H1 (cell line): ENCODE measurements at regions of chr1 and their contacts with region 1.

Region 1: GRCh38 chr1:201481761-201482493 is 12.9 kb upstream of the PHLDA3 start:
- DNase-seq: peak; percentile 88 to 96
- H3K4me3 ChIP-seq: peak overlapping the region; percentile 31 to 65 (median 38); a peak in 7 of 8 replicates
- H3K27ac ChIP-seq: no peak overlapping the region
- H3K4me1 ChIP-seq: peaks cover 0 to 5% (median 2%) of the 10 kb centered on the region in 4 experiments; a peak in 4 of 7 replicates
- H3K27me3 ChIP-seq: peaks cover 0 to 12% (median 7%) of the 10 kb centered on the region in 4 experiments; a peak in 6 of 7 replicates
- CTCF ChIP-seq: peak; percentile 94 to 98 (median 95)
- EP300 ChIP-seq: peak in 1 of 2 experiments; percentile 3; a peak in 1 of 3 replicates
- POLR2A ChIP-seq: no peak
- RAD21 ChIP-seq: peak; percentile 96 to 97

Region 2: DNA sequence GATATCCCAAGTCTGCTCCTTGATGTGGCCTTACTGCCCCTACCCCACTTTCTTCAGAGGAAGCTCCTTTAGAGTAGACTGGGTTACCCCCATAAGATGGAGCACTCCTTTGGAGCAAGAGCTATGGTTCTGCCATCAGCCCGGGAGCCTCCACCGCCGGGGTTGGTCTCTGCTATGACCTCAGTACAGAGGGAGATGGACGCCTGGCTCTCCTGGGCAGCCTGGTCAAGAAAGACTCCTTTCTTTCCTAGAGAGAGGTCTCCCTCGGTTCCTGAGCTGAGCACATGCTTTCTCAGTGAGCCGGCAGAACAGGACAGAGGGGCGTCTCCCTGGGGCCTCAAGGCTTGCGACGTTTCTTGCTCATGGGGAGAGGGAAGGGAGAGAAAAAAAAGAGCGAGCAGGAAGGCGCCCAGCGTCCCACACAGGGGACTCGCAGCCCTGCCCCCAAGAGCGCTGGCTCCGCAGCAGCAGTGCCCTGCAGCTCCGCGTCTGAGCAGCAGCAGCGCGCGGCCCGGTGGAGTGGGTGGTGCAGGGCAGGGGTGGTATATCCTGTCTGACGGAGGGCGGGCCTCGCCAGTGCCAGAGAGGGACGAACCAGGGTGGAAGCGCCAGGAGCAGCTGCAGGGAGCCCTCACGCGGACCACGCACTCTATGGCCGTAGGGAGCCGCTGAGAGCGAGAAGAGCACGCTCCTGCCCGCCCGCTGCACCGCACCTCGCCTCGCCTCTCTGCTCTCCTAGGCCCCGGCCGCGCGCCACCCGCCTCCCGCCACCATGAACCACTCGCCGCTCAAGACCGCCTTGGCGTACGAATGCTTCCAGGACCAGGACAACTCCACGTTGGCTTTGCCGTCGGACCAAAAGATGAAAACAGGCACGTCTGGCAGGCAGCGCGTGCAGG is 198.7 kb before region 1 on chr1 and contains the start of gene PKP1:
- CTCF ChIA-PET with region 1: no interaction called
- POLR2A ChIA-PET with region 1: no interaction called
- DNase-seq: peak in 1 of 2 experiments; percentile 79
- H3K4me3 ChIP-seq: peak within 1 kb of the TSS in 3 of 4 experiments; percentile 3 to 41 (median 16); a peak in 3 of 8 replicates
- H3K27ac ChIP-seq: no peak within 1 kb of the TSS
- H3K4me1 ChIP-seq: peaks cover 0 to 9% (median 9%) of the 10 kb centered on the region in 4 experiments; a peak in 5 of 7 replicates
- H3K27me3 ChIP-seq: peaks cover 15 to 31% (median 30%) of the 10 kb centered on the region in 4 experiments
- CTCF ChIP-seq: no peak
- EP300 ChIP-seq: no peak
- POLR2A ChIP-seq: no peak
- RAD21 ChIP-seq: no peak
- total RNA-seq, gene PKP1: 0.88 and 0.95 TPM in 2 replicates

Region 3: DNA sequence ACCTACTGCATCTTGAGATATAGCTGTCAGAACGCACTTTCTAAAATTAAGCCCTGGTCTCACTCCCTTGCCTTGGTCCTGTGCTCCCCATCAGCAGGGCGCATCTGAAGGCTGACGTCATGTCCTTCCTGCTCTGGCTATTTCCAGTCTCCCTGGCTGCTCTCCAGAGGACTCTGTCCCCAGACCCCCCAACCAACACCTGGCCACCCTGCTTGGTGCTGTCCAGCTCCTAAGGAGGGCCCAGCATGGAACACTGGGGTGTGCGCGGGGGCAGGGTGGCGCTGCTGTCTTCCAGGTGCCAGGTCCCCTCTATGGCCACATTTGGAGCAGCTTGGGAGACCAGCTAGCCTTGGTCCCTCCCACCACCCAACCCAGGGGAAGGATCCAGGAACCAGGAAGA is 112.7 kb before region 1 on chr1:
- CTCF ChIA-PET with region 1: no interaction called
- POLR2A ChIA-PET with region 1: no interaction called
- DNase-seq: no peak
- H3K4me3 ChIP-seq: no peak overlapping the region
- H3K27ac ChIP-seq: no peak overlapping the region
- H3K4me1 ChIP-seq: peaks cover 0 to 4% (median 1%) of the 10 kb centered on the region in 4 experiments; a peak in 2 of 7 replicates
- H3K27me3 ChIP-seq: no peaks in the 10 kb centered on the region
- CTCF ChIP-seq: no peak
- EP300 ChIP-seq: no peak
- POLR2A ChIP-seq: no peak
- RAD21 ChIP-seq: no peak

Region 4: DNA sequence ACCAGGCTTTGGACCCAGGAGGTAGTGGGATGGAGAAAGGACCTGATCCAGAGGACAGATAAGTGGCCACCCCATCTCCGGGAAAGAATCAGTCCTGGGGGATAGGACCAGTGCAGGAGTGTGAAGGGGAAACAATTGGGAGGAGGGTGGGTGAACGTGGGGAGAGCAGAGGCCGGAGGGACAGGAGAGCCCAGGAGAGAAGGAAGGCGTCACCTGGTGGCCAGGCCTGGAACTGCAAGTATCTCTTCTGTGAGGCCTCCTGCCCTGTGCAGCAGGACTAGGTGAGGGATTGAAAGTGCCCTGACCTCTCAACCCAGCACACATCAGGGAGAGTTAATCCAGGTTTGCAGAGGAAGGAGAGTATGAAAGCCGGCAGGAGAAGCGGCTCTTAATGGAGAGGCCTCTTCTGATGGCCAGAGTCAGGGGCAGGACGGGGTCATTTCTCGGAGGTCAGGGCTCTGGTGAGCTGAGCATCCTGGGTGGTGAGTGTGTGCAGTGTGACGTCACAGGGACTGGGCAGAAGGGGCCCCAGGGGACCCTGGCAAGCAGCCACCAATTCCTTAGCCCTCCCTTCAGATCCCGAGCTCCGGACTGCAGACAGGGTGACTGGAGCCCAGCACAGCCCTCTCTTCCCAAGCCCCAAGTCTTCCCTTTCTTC is 73.6 kb before region 1 on chr1:
- CTCF ChIA-PET with region 1: interaction called, 18 read pairs
- POLR2A ChIA-PET with region 1: no interaction called
- DNase-seq: peak; percentile 80 to 98
- H3K4me3 ChIP-seq: no peak overlapping the region
- H3K27ac ChIP-seq: no peak overlapping the region
- H3K4me1 ChIP-seq: peaks cover 0 to 5% (median 0%) of the 10 kb centered on the region in 4 experiments; a peak in 2 of 7 replicates
- H3K27me3 ChIP-seq: no peaks in the 10 kb centered on the region; a peak in 1 of 7 replicates
- CTCF ChIP-seq: peak; percentile 91 to 99 (median 99)
- EP300 ChIP-seq: no peak
- POLR2A ChIP-seq: no peak
- RAD21 ChIP-seq: peak; percentile 81 to 82

Region 5: GRCh38 chr1:201447911-201448871 is 33.7 kb before region 1 on chr1:
- CTCF ChIA-PET with region 1: interaction called, 171 read pairs
- POLR2A ChIA-PET with region 1: interaction called, 17 read pairs
- DNase-seq: peak; percentile 79 to 84
- H3K4me3 ChIP-seq: peak overlapping the region in 3 of 4 experiments; percentile 7 to 33 (median 17); a peak in 3 of 8 replicates
- H3K27ac ChIP-seq: no peak overlapping the region
- H3K4me1 ChIP-seq: peaks cover 4 to 20% (median 15%) of the 10 kb centered on the region in 4 experiments
- H3K27me3 ChIP-seq: no peaks in the 10 kb centered on the region; a peak in 1 of 7 replicates
- CTCF ChIP-seq: peak; percentile 86 to 92 (median 91)
- EP300 ChIP-seq: no peak
- POLR2A ChIP-seq: no peak
- RAD21 ChIP-seq: peak; percentile 68 to 75

Region 6: DNA sequence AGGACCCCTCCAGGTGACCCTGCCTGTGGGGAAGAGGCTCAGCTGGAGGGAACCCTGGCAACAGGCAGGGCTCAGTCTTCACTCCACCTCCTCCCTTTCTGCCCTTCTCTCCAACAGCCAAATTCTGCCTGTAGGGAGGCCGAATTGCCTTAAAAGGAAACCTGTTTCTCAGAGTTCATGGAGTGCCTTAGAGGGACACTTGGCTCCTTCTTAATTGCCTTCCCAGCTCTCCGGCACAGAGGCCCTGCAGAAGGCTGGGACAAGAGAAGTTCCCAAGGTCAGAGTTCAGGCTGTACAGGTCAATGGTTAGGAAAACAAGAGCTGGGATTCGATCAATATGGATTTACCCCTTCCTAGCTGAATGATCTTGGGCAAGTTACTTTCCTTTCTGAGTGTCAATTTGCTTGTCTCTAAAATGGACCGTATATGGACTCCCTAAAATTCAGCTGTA is 18.8 kb after region 1 on chr1:
- CTCF ChIA-PET with region 1: interaction called, 390 read pairs
- POLR2A ChIA-PET with region 1: interaction called, 15 read pairs
- DNase-seq: no peak
- H3K4me3 ChIP-seq: no peak overlapping the region
- H3K27ac ChIP-seq: peak overlapping the region; percentile 63
- H3K4me1 ChIP-seq: peaks cover 11 to 27% (median 21%) of the 10 kb centered on the region in 4 experiments
- H3K27me3 ChIP-seq: peaks cover 0 to 2% (median under 1%) of the 10 kb centered on the region in 4 experiments; a peak in 4 of 7 replicates
- CTCF ChIP-seq: no peak
- EP300 ChIP-seq: no peak
- POLR2A ChIP-seq: no peak
- RAD21 ChIP-seq: no peak

Region 7: GRCh38 chr1:201530741-201531531 is 49.0 kb after region 1 on chr1:
- CTCF ChIA-PET with region 1: interaction called, 91 read pairs
- POLR2A ChIA-PET with region 1: no interaction called
- DNase-seq: peak in 1 of 2 experiments; percentile 90
- H3K4me3 ChIP-seq: no peak overlapping the region
- H3K27ac ChIP-seq: no peak overlapping the region
- H3K4me1 ChIP-seq: peaks cover 0 to 5% (median 3%) of the 10 kb centered on the region in 4 experiments; a peak in 3 of 7 replicates
- H3K27me3 ChIP-seq: no peaks in the 10 kb centered on the region
- CTCF ChIP-seq: peak; percentile 88 to 92 (median 91)
- EP300 ChIP-seq: no peak
- POLR2A ChIP-seq: no peak
- RAD21 ChIP-seq: peak; percentile 96

Region 8: DNA sequence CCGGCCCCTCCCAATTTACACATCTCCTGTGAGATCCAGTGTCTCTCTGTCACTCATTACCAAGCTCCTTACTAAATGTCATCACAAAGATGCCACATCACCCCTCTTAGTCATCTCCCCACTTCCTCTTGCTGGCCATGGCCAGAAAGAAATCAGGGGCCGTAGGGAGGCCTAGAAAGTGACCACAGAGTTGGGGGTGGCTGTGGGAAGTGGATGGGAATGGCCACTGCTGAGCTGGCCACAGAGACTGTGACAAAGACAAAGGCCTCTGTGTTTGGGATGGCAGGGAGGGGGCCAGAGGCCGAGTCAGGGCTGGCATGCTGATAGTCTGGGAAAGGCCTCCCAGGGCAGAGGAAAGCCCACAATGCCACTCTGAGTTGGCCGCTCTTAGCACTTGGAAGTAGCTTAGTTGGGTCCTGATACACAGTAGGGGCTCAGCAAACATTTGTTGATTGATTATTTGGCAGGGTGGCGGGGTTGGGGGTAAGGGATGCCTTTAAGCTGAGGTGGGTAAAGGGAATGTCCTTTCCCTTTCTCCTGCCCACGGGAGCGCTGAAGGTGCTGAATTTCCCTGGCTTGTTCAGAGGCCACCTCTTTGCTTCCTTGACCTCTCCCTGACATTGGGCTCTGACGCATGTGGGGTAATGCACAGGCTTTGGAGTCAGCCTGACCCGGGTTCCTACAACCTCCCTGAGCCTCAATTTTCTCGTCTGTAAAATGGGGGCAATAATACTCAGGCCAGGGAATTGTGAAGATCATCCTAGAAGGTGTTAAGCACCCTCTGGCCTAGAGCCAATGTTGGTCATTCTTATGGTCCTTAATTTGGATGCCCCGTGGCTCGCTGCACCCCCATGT is 70.2 kb after region 1 on chr1:
- CTCF ChIA-PET with region 1: interaction called, 43 read pairs
- POLR2A ChIA-PET with region 1: no interaction called
- DNase-seq: no peak
- H3K4me3 ChIP-seq: no peak overlapping the region
- H3K27ac ChIP-seq: no peak overlapping the region
- H3K4me1 ChIP-seq: peaks cover 0 to 6% (median 1%) of the 10 kb centered on the region in 4 experiments; a peak in 3 of 7 replicates
- H3K27me3 ChIP-seq: no peaks in the 10 kb centered on the region
- CTCF ChIP-seq: no peak
- EP300 ChIP-seq: no peak
- POLR2A ChIP-seq: no peak
- RAD21 ChIP-seq: no peak

Region 9: GRCh38 chr1:201582705-201583442 is 100.9 kb after region 1 on chr1:
- CTCF ChIA-PET with region 1: no interaction called
- POLR2A ChIA-PET with region 1: no interaction called
- DNase-seq: no peak
- H3K4me3 ChIP-seq: no peak overlapping the region
- H3K27ac ChIP-seq: no peak overlapping the region
- H3K4me1 ChIP-seq: peaks cover 0 to 6% (median 4%) of the 10 kb centered on the region in 4 experiments; a peak in 5 of 7 replicates
- H3K27me3 ChIP-seq: no peaks in the 10 kb centered on the region; a peak in 1 of 7 replicates
- CTCF ChIP-seq: no peak
- EP300 ChIP-seq: no peak
- POLR2A ChIP-seq: no peak
- RAD21 ChIP-seq: no peak